B cell (primary cell): ENCODE measurements at regions of chr1 and their contacts with region 1.

Region 1: DNA sequence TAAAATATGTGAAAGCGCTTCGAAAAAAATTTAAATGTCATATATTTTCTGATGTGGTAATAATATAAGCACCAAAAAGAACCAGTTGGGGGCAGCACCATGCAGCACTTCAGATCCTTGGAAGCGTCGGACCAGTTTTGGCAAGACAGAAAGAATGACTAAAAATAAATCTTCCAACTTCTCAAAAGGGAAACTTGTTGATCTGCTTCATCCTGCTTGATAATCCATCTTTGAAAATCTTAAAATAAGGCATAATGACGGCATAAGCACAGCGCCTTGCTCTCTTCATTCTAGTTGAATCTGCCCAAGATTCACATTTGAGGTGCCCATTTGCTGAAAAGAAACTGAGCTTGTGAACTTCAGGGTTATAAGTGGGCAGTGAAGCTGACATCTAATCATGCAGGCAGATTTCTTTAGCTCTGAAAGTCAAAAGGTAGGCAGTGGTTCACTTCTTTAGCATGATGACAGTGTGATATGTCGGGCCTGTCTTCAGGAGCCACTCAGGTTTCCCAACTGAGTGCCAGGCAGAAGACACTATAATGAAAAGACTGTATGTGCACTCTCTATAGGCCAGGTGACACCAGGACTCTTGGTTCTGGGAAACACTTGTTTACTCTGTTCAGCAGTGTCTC is 19.8 kb upstream of the MUTYH start:
- DNase-seq: peak; percentile 77
- ATAC-seq: peak; percentile 67
- H3K4me3 ChIP-seq: no peak overlapping the region
- H3K4me3 Mint-ChIP-seq: peak overlapping the region; percentile 28
- H3K27ac ChIP-seq: peak overlapping the region in 1 of 2 donors; percentile 68
- H3K27ac Mint-ChIP-seq: peak overlapping the region; percentile 37
- H3K4me1 ChIP-seq: peaks cover 7 to 12% of the 10 kb centered on the region in 2 donors
- H3K4me1 Mint-ChIP-seq: peaks cover 24% of the 10 kb centered on the region
- H3K27me3 ChIP-seq: no peaks in the 10 kb centered on the region
- H3K27me3 Mint-ChIP-seq: no peaks in the 10 kb centered on the region
- CTCF ChIP-seq: peak; percentile 83

Region 2: DNA sequence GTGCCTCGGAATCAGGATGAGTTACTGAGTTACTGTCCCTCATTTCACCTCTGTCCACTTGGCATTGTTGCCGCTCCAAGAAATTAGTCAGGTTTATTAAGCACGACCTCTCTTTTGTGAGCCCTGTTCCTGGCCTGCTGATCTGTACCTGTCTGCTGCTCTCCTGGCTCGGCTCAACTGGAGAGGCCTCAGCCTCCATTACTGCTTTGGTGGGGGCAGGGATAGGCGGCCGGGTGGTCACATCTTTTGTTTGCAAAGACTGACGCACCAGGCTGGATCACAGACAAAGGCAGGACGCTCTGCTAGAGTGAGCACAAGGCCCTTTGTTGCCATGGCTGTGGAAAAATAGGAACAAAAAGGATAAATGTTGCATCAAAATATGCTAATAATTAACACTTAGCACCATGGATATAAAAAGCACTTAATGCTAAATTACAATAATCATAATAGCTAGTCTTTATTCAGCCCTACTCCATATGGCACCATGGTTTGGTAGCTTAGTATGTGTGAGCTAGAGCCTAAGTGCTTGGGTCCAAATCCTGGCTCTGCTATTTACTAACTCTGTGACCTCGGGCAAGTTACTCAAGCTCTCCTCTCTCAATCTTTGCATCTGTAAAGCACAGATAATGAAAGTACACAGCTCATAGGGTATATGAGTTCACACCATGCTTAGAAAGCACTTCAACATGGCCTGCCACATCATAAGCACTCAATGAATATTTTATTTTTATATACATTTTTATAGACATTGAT is 62.2 kb before region 1 on chr1:
- CTCF ChIA-PET with region 1: no interaction called
- POLR2A ChIA-PET with region 1: interaction called, 10 read pairs
- intact Hi-C with region 1: no loop called
- DNase-seq: no peak
- ATAC-seq: no peak
- H3K4me3 ChIP-seq: no peak overlapping the region
- H3K4me3 Mint-ChIP-seq: no peak overlapping the region
- H3K27ac ChIP-seq: no peak overlapping the region
- H3K27ac Mint-ChIP-seq: no peak overlapping the region
- H3K4me1 ChIP-seq: no peaks in the 10 kb centered on the region
- H3K4me1 Mint-ChIP-seq: peaks cover 5% of the 10 kb centered on the region
- H3K27me3 ChIP-seq: no peaks in the 10 kb centered on the region
- H3K27me3 Mint-ChIP-seq: no peaks in the 10 kb centered on the region
- CTCF ChIP-seq: no peak

Region 3: DNA sequence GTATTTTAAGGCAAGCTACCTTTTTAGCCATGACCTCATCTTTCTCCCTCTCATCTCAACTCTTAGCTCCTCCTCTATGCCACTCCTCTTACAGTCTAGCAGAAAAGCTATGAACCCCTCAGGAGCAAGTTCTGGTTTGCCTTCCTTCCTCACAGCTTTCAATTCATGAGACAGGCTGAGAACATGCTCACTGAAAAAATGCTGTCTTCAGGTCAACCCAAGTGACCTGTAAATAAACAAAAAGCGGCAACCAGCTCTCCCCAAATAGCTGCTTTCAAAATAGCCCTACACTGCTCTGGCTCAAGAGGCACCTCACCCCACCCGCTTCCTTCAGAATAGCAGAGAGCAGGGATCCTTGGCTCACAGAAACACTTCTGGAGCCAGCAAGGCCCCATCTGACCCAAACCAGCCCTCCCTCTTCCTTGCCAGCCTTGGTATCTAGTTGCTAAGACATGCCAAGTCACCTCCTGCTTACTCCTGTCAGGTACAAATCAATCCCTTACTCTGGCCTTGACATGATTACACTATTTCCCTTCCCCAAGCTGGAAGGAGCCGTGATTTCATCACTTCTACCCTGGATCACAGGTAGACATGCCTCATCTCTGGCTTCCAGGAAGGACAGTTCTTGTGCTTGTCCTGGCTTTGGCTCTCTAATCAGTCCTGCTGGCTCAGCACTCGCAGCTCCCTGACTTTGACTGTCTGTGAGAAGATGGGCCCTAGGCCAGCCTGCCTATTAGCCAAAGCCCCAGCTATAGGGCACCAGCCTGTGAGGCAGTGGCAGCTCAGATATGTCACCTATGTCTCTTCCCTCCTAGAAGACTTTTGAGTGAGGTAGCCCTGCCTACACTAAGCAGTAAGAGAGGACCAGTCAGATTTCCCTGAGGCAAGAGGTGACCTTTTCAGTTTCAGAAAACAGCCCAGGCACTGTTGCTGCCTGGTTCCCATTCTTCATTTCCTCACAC is 11.0 kb before region 1 on chr1:
- CTCF ChIA-PET with region 1: interaction called, 14 read pairs
- POLR2A ChIA-PET with region 1: no interaction called
- intact Hi-C with region 1: no loop called
- DNase-seq: no peak
- ATAC-seq: no peak
- H3K4me3 ChIP-seq: no peak overlapping the region
- H3K4me3 Mint-ChIP-seq: no peak overlapping the region
- H3K27ac ChIP-seq: no peak overlapping the region
- H3K27ac Mint-ChIP-seq: peak overlapping the region; percentile 15
- H3K4me1 ChIP-seq: no peaks in the 10 kb centered on the region
- H3K4me1 Mint-ChIP-seq: no peaks in the 10 kb centered on the region
- H3K27me3 ChIP-seq: no peaks in the 10 kb centered on the region
- H3K27me3 Mint-ChIP-seq: no peaks in the 10 kb centered on the region
- CTCF ChIP-seq: no peak

Region 4: DNA sequence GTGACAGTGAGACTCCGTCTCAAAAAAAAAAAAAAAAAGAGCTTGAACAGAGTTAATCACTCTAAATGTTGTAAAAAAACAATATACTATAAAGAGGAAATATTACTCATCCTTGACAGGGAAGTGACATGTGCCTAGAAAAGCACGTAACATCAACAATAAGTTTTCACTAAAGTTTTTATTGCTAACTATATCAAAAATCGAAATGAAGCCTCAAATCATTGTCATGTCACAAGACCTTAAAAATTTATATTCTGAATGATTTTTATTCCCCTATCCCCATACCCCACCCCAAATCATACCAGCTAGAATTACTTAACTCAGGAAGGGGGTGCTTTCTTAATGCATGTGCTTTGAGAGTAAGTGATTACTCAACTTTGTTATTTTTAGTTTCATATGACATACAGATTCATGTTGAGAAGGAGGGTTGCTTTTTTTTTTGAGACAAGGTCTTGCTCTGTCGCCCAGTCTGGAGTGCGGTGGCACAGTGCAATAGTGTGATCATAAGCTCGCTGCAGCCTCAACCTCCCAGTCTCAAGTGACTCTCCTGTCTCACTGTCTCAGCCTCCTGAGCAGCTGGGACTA is 33.8 kb after region 1 on chr1:
- CTCF ChIA-PET with region 1: interaction called, 20 read pairs
- POLR2A ChIA-PET with region 1: interaction called, 8 read pairs
- intact Hi-C with region 1: loop called (anchors 1 kb)
- DNase-seq: peak; percentile 82
- ATAC-seq: peak; percentile 82
- H3K4me3 ChIP-seq: peak overlapping the region in 4 of 5 experiments; percentile 1 to 52 (median 24)
- H3K4me3 Mint-ChIP-seq: peak overlapping the region; percentile 82
- H3K27ac ChIP-seq: peak overlapping the region; percentile 96 to 99
- H3K27ac Mint-ChIP-seq: peak overlapping the region; percentile 99
- H3K4me1 ChIP-seq: peaks cover 35 to 37% of the 10 kb centered on the region in 2 donors
- H3K4me1 Mint-ChIP-seq: peaks cover 44% of the 10 kb centered on the region
- H3K27me3 ChIP-seq: no peaks in the 10 kb centered on the region
- H3K27me3 Mint-ChIP-seq: no peaks in the 10 kb centered on the region
- CTCF ChIP-seq: no peak

Region 5: GRCh38 chr1:45410850-45411314 is 50.9 kb after region 1 on chr1:
- CTCF ChIA-PET with region 1: interaction called, 32 read pairs
- POLR2A ChIA-PET with region 1: no interaction called
- intact Hi-C with region 1: loop called (anchors 5 kb)
- DNase-seq: no peak
- ATAC-seq: no peak
- H3K4me3 ChIP-seq: no peak overlapping the region
- H3K4me3 Mint-ChIP-seq: peak overlapping the region; percentile 44
- H3K27ac ChIP-seq: peak overlapping the region in 1 of 2 donors; percentile 88
- H3K27ac Mint-ChIP-seq: peak overlapping the region; percentile 86
- H3K4me1 ChIP-seq: peaks cover 60 to 61% of the 10 kb centered on the region in 2 donors
- H3K4me1 Mint-ChIP-seq: peaks cover 72% of the 10 kb centered on the region
- H3K27me3 ChIP-seq: no peaks in the 10 kb centered on the region
- H3K27me3 Mint-ChIP-seq: no peaks in the 10 kb centered on the region
- CTCF ChIP-seq: no peak

Region 6: GRCh38 chr1:45512641-45513054 is 152.7 kb after region 1 on chr1:
- CTCF ChIA-PET with region 1: interaction called, 11 read pairs
- POLR2A ChIA-PET with region 1: interaction called, 10 read pairs
- intact Hi-C with region 1: no loop called
- DNase-seq: peak; percentile 76
- ATAC-seq: peak; percentile 66
- H3K4me3 ChIP-seq: no peak overlapping the region
- H3K4me3 Mint-ChIP-seq: no peak overlapping the region
- H3K27ac ChIP-seq: no peak overlapping the region
- H3K27ac Mint-ChIP-seq: peak overlapping the region; percentile 76
- H3K4me1 ChIP-seq: no peaks in the 10 kb centered on the region
- H3K4me1 Mint-ChIP-seq: peaks cover 8% of the 10 kb centered on the region
- H3K27me3 ChIP-seq: no peaks in the 10 kb centered on the region
- H3K27me3 Mint-ChIP-seq: no peaks in the 10 kb centered on the region
- CTCF ChIP-seq: peak; percentile 89

Region 7: GRCh38 chr1:45876000-45876617 is 516.1 kb after region 1 on chr1:
- CTCF ChIA-PET with region 1: no interaction called
- POLR2A ChIA-PET with region 1: no interaction called
- intact Hi-C with region 1: no loop called
- DNase-seq: peak; percentile 9
- ATAC-seq: no peak
- H3K4me3 ChIP-seq: no peak overlapping the region
- H3K4me3 Mint-ChIP-seq: no peak overlapping the region
- H3K27ac ChIP-seq: no peak overlapping the region
- H3K27ac Mint-ChIP-seq: no peak overlapping the region
- H3K4me1 ChIP-seq: peaks cover 0 to 3% of the 10 kb centered on the region in 2 donors
- H3K4me1 Mint-ChIP-seq: peaks cover 4% of the 10 kb centered on the region
- H3K27me3 ChIP-seq: peaks cover 0 to 28% (median 14%) of the 10 kb centered on the region in 4 experiments
- H3K27me3 Mint-ChIP-seq: peaks cover 14% of the 10 kb centered on the region
- CTCF ChIP-seq: no peak